ENCODE measurements at regions of chr11 and their contacts with region 1.

Region 1: GRCh38 chr11:20609727-20610707 is 10.6 kb downstream of the SLC6A5 start:
- DNase-seq: peak; percentile 65
- H3K4me3 ChIP-seq: no peak overlapping the region
- H3K27ac ChIP-seq: no peak overlapping the region
- H3K4me1 ChIP-seq: no peaks in the 10 kb centered on the region
- H3K27me3 ChIP-seq: peaks cover 23 to 42% of the 10 kb centered on the region in 2 experiments
- CTCF ChIP-seq: peak; percentile 83 to 96
- POLR2A ChIP-seq: no peak

Region 2: GRCh38 chr11:20162824-20163782 is 446.9 kb before region 1 on chr11:
- CTCF ChIA-PET with region 1: no interaction called
- POLR2A ChIA-PET with region 1: no interaction called
- dilution Hi-C with region 1: no loop called
- intact Hi-C with region 1: loop called (anchors 10 kb)
- DNase-seq: peak; percentile 27
- H3K4me3 ChIP-seq: no peak overlapping the region
- H3K27ac ChIP-seq: no peak overlapping the region
- H3K4me1 ChIP-seq: peaks cover 8% of the 10 kb centered on the region
- H3K27me3 ChIP-seq: peaks cover 67 to 93% of the 10 kb centered on the region in 2 experiments
- CTCF ChIP-seq: no peak
- POLR2A ChIP-seq: no peak

Region 3: DNA sequence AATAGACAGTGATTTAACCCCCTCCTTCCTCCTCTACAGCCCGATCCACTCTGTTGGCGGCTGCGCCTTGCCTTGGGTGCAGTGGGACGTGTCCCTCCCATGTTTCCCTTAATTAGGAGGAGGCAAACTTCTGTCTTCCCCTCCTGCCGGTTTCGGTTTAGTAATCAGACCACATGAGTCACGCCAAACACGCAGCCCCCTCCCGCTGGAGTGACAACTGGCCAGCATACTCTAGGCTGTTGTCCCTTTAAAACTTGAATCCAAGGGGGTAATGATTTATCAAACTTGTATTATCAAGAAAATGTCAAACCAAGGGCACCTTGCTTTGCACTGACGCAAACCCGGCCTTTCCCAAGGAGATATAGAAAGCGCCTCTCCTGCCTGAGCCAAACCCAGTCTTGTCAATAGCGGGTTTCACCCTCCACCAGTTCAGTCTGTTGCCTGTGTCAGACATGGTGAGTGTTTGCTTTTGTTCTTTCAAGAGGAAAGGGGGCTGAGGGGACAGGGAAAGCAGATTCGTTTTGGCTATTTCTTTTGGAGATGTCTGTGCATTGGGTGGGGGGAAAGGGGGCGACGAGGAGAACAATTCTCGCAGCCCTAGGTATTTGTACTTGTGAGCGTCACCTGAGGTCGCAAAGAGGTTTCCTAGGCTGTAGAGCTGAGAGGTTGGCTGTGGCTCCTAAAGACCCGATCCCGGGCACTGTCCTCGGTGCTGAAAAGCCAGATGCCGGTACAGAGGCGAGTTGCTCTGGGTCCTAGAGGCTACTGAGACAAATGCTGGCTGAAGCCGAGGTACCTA is 10.6 kb before region 1 on chr11 and contains the start of gene SLC6A5:
- CTCF ChIA-PET with region 1: interaction called, 12 read pairs
- POLR2A ChIA-PET with region 1: no interaction called
- dilution Hi-C with region 1: no loop called
- intact Hi-C with region 1: no loop called
- DNase-seq: peak; percentile 14
- H3K4me3 ChIP-seq: no peak within 1 kb of the TSS
- H3K27ac ChIP-seq: no peak within 1 kb of the TSS
- H3K4me1 ChIP-seq: no peaks in the 10 kb centered on the region
- H3K27me3 ChIP-seq: peaks cover 82 to 94% of the 10 kb centered on the region in 2 experiments
- CTCF ChIP-seq: no peak
- POLR2A ChIP-seq: no peak
- total RNA-seq, gene SLC6A5: not detected in 2 replicates